ENCODE measurements at regions of chr1 and their contacts with region 1.

Region 1: GRCh38 chr1:184036517-184036949 is 995 bp downstream of the COLGALT2 start:
- DNase-seq: peak; percentile 49 to 54
- ATAC-seq: peak in 7 of 8 donors; percentile 60 to 90 (median 72)
- H3K4me3 ChIP-seq: peak overlapping the region; percentile 45 to 88 (median 69)
- H3K27ac ChIP-seq: peak overlapping the region; percentile 53 to 90 (median 76)
- H3K4me1 ChIP-seq: peaks cover 0 to 20% (median 7%) of the 10 kb centered on the region in 9 donors
- H3K27me3 ChIP-seq: peaks cover 0 to 52% (median 11%) of the 10 kb centered on the region in 7 donors
- CTCF ChIP-seq: no peak

Region 2: GRCh38 chr1:183932412-183932811 is 104.1 kb before region 1 on chr1:
- intact Hi-C with region 1: loop called in 2 of 10 experiments (anchors 10 kb)
- DNase-seq: peak; percentile 85
- ATAC-seq: peak; percentile 81 to 91 (median 86)
- H3K4me3 ChIP-seq: peak overlapping the region in 2 of 10 donors; percentile 10 to 11
- H3K27ac ChIP-seq: peak overlapping the region; percentile 12 to 78 (median 50)
- H3K4me1 ChIP-seq: peaks cover 9 to 35% (median 22%) of the 10 kb centered on the region in 9 donors
- H3K27me3 ChIP-seq: no peaks in the 10 kb centered on the region
- CTCF ChIP-seq: no peak

Region 3: DNA sequence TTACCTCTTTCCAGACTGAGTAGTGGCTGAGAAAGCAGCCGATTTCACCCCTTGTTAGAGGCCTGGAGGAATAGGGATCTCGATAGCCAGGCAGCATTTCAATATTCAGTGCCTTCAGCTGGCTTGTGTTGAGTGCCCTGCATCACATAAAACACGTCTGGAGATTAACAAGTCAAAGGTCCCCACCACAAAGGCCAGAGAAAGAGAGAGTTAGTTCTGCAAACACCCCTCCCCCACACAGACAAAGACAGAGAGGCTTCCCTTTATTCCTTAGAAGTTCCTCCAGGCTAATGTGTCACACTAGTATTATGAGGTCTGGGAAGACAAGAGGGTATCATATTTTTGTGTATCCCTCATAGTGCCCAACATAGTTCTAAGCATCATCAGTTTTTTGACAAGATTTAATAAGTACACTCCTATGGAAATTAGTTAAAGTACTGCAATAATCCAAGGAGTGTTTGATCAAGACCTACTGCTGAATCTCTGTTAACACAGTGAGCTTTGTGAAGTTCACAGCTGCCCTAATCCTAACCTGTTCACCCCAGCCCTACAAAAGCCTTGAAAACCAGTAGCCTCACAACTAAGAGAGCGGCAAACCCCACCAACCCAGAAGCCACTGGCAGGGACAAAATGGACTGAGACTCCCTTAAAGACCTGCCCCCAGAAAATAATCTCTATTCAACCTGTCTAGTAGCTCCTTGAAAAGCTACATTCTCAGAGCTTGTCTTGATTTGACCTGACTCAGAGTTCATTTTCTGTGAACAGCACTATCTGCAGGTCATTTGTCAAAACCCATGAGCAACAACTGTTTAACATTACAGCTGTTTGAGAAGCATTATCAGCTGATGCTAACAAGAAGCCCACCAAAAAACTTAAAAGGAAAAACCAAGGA is 90.9 kb before region 1 on chr1:
- intact Hi-C with region 1: loop called in 3 of 10 experiments (anchors 5 to 10 kb)
- DNase-seq: no peak
- ATAC-seq: no peak
- H3K4me3 ChIP-seq: no peak overlapping the region
- H3K27ac ChIP-seq: peak overlapping the region in 4 of 10 donors; percentile 15 to 51 (median 29)
- H3K4me1 ChIP-seq: peaks cover 0 to 16% (median 7%) of the 10 kb centered on the region in 9 donors
- H3K27me3 ChIP-seq: no peaks in the 10 kb centered on the region
- CTCF ChIP-seq: no peak

Region 4: DNA sequence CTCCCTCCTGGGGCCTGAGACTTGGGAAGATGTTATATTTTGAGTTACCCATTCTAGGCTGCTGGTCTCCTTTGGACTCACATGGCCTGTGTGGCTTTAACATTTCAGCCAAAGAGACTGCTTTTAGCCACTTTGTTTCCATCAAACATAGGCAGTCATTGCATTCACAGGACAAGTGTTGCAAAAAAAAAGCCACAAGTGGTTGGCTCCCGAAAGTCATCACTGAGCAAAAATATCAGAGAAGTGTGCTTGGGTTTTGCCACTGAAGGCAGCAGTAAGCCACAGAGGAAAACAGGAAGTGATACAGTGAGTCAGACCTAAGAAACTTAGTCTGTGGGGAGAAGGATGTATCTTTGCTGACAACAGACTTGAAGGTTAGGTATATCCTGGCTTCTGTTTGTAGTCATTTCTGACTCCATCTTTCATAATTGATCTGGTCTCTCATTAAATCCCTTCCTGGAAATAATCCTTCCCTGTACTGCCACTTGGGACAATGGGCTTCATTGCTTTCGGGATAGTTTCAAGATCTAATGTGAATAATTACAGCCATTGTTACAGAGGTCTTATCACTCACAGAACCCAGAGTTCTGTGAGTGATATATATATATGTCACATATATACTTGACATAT is 79.9 kb before region 1 on chr1:
- intact Hi-C with region 1: loop called in 3 of 10 experiments (anchors 5 to 10 kb)
- DNase-seq: no peak
- ATAC-seq: peak; percentile 41 to 84 (median 52)
- H3K4me3 ChIP-seq: no peak overlapping the region
- H3K27ac ChIP-seq: peak overlapping the region in 7 of 10 donors; percentile 5 to 86 (median 44)
- H3K4me1 ChIP-seq: peaks cover 0 to 49% (median 12%) of the 10 kb centered on the region in 9 donors
- H3K27me3 ChIP-seq: no peaks in the 10 kb centered on the region
- CTCF ChIP-seq: peak in 3 of 9 donors; percentile 6 to 26 (median 15)

Region 5: GRCh38 chr1:183989078-183989577 is 47.4 kb before region 1 on chr1:
- intact Hi-C with region 1: loop called in 2 of 10 experiments (anchors 5 to 10 kb)
- DNase-seq: peak; percentile 16 to 33
- ATAC-seq: peak in 6 of 8 donors; percentile 41 to 91 (median 70)
- H3K4me3 ChIP-seq: no peak overlapping the region
- H3K27ac ChIP-seq: peak overlapping the region in 3 of 10 donors; percentile 37 to 74 (median 43)
- H3K4me1 ChIP-seq: peaks cover 0 to 39% (median 16%) of the 10 kb centered on the region in 9 donors
- H3K27me3 ChIP-seq: no peaks in the 10 kb centered on the region
- CTCF ChIP-seq: no peak

Region 6: GRCh38 chr1:184163674-184164465 is 127.3 kb after region 1 on chr1:
- intact Hi-C with region 1: no loop called
- DNase-seq: no peak
- ATAC-seq: peak in 6 of 8 donors; percentile 20 to 89 (median 55)
- H3K4me3 ChIP-seq: no peak overlapping the region
- H3K27ac ChIP-seq: peak overlapping the region in 2 of 10 donors; percentile 39 to 42
- H3K4me1 ChIP-seq: peaks cover 0 to 68% (median 19%) of the 10 kb centered on the region in 9 donors
- H3K27me3 ChIP-seq: no peaks in the 10 kb centered on the region
- CTCF ChIP-seq: no peak

Measured in heart right ventricle (tissue), 16 donors.